OCI-LY7 (cell line): ENCODE measurements at regions of chr10 and their contacts with region 1.

Region 1: GRCh38 chr10:49119746-49120145 is 4.4 kb upstream of the VSTM4 start:
- DNase-seq: no peak
- H3K4me3 ChIP-seq: no peak overlapping the region
- H3K27ac ChIP-seq: no peak overlapping the region
- H3K4me1 ChIP-seq: peaks cover 16% of the 10 kb centered on the region
- CTCF ChIP-seq: no peak

Region 2: DNA sequence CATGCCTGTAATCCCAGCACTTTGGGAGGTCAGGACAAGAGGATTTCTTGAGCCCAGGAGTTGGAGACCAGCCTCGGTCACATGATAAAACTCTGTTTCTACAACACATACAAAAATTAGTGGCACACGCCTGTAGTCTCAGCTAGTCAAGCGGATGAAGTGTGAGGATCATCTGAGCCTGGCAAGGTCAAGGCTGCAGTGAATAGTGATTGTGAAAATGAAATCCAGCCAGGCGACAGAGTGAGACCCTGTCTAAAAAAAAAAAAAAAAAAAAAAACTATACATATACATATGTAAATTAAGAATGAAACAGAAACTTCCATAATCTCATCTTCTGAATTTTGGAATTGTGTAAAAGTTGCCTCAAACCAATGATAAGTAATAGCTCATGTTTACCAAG is 32.3 kb after region 1 on chr10:
- CTCF ChIA-PET with region 1: no interaction called
- POLR2A ChIA-PET with region 1: interaction called, 10 read pairs
- intact Hi-C with region 1: no loop called
- DNase-seq: no peak
- H3K4me3 ChIP-seq: no peak overlapping the region
- H3K27ac ChIP-seq: no peak overlapping the region
- H3K4me1 ChIP-seq: peaks cover 7% of the 10 kb centered on the region
- CTCF ChIP-seq: no peak